ENCODE measurements at regions of chr20 and their contacts with region 1.

Region 1: DNA sequence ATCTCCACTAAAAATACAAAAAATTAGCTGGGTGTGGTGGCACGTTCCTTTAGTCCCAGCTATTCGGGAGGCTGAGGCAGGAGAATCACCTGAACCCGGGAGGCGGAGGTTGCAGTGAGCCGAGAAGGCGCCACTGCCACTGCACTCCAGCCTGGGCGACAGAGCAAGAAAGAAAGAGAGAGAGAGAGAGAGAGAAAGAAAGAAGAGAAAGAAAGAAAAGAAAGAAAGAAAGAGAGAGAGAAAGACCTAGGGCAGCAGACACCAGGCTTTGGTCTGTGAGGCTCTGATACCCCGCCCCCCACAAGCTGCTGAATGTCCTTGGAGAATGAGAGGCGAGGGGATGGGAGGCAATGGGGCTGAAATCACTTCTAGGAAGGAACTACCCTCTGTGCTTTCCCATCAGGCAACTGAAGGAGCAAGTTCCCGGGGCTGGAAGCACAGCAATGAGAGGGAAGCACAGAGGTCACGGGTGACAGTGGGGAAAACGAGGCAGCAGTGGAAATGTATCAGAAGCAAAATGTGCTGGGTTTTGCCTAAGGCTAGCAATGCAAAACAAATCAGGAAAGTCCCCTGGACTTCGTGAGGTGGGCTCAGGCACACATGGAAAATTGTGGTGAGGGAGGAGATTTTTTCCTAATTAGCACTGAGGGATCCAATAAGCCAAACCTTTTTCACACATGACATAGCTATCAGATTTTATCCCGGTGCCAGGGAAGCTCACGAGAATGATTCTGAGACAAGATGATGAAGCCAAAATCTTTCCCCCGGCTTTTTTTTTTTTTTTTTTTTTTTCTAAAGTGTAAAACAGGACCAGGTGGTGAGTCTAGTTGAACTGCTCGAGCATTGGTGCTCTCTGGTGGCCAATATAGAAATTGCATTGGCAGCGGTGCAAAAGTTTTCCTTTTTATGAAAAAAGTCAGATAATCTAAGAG is 16.9 kb upstream of the ARFGEF2 start:
- DNase-seq: no peak
- H3K4me3 ChIP-seq: no peak overlapping the region
- H3K27ac ChIP-seq: no peak overlapping the region
- H3K4me1 ChIP-seq: peaks cover 0 to 3% (median 0%) of the 10 kb centered on the region in 4 donors
- H3K27me3 ChIP-seq: no peaks in the 10 kb centered on the region
- CTCF ChIP-seq: peak; percentile 63 to 79 (median 72)
- EP300 ChIP-seq: no peak
- POLR2A ChIP-seq: no peak

Region 2: GRCh38 chr20:48153135-48153922 is 751.3 kb before region 1 on chr20:
- intact Hi-C with region 1: no loop called
- DNase-seq: no peak
- H3K4me3 ChIP-seq: no peak overlapping the region
- H3K27ac ChIP-seq: no peak overlapping the region
- H3K4me1 ChIP-seq: peaks cover 0 to 5% (median 0%) of the 10 kb centered on the region in 4 donors
- H3K27me3 ChIP-seq: no peaks in the 10 kb centered on the region
- CTCF ChIP-seq: no peak
- EP300 ChIP-seq: no peak
- POLR2A ChIP-seq: no peak

Region 3: DNA sequence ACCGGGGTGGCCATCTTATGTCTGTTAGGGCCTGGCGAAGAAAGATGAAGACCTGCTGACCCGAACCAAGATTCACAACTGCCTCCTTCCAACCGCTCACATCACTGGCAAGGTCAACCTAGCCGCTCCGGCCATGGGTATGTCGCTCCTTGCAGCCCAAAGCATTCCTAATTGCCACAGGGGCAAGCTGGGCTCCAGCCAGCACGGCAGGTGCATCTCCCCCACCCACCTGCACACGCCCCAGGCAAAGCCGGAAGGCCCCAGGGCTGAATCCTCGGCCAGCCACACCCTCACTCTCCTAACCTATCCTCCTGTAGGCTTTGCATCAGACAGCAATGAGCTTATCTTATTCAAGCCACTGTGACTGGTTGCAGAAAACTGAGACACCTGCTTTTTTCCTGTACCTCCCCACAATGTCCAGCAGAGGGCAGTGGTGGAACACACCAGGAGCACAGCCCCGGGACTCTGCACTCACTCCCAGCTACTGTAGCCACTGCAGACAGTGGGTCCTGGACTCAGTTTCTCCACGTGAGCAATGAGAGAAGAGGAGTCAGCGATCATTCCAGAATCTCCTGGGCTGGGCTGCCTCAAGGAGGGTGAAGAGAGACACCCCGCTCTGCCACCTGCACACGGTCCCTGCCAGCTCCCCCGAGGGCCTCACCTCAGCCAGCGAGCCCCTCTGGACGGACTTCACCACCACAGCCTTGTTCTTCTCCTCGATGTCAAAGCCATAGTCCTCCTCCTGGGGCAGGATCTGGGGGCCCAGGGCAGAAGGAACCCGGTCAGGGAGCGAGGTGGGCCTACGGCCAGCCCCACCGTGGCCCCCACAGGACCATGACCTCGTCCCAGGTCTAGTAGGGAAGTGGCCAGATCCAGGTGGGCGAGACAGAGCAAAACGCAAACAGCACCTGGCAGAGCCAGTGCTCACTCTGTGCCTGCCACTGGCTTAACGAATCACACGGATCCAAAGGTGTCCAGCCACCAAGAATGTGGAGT is 246.9 kb before region 1 on chr20:
- intact Hi-C with region 1: loop called (anchors 1 kb)
- DNase-seq: peak; percentile 83
- H3K4me3 ChIP-seq: no peak overlapping the region
- H3K27ac ChIP-seq: no peak overlapping the region
- H3K4me1 ChIP-seq: no peaks in the 10 kb centered on the region
- H3K27me3 ChIP-seq: no peaks in the 10 kb centered on the region
- CTCF ChIP-seq: peak; percentile 83 to 94 (median 92)
- EP300 ChIP-seq: no peak
- POLR2A ChIP-seq: no peak

Region 4: GRCh38 chr20:48828022-48828743 is 76.4 kb before region 1 on chr20:
- intact Hi-C with region 1: loop called (anchors 10 kb)
- DNase-seq: peak; percentile 81
- H3K4me3 ChIP-seq: peak overlapping the region; percentile 25 to 61 (median 52)
- H3K27ac ChIP-seq: peak overlapping the region; percentile 58 to 77 (median 70)
- H3K4me1 ChIP-seq: peaks cover 0 to 24% (median 17%) of the 10 kb centered on the region in 4 donors
- H3K27me3 ChIP-seq: peaks cover 0 to 37% (median 21%) of the 10 kb centered on the region in 3 donors
- CTCF ChIP-seq: no peak
- EP300 ChIP-seq: no peak
- POLR2A ChIP-seq: no peak

Region 5: DNA sequence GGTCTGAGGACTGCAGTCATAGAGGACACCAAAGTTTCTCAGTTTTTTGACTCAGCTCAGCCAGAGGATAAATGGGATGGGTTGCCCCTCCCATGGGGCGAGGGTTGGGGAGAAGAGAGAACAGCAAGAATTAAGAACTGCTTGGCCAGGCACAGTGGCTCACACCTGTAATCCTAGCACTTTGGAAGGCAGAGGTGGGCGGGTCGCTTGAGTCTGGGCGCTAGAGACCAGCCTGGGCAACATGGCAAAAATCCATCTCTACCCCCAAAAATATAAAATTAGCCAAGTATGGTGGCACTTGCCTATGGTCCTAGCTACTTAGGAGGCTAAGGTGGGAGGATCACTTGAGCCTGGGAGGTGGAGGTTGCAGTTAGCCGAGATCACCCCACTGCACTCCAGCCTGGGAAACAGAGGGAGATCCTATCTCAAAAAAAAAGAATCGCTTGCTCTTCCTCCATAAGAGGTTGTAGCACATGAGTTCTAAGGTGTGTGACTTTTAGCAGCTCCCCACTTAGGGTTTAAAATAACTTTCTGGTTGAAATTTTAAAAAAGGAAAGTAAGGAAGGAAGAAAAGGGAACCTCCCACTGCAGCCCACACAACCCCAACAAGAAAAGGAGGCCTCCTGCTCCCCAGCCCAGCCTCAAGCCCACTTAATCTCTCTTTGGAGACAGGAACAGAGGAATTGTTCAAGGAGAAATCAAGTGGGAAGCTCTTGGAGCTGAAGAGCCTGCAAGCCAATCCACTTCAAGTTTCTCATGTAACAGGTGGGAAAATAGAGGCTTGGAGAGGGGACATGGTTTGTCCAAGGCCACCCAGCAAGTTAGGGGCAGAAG is 37.9 kb before region 1 on chr20:
- intact Hi-C with region 1: no loop called
- DNase-seq: no peak
- H3K4me3 ChIP-seq: no peak overlapping the region
- H3K27ac ChIP-seq: no peak overlapping the region
- H3K4me1 ChIP-seq: no peaks in the 10 kb centered on the region
- H3K27me3 ChIP-seq: no peaks in the 10 kb centered on the region
- CTCF ChIP-seq: no peak
- EP300 ChIP-seq: no peak
- POLR2A ChIP-seq: no peak

Region 6: DNA sequence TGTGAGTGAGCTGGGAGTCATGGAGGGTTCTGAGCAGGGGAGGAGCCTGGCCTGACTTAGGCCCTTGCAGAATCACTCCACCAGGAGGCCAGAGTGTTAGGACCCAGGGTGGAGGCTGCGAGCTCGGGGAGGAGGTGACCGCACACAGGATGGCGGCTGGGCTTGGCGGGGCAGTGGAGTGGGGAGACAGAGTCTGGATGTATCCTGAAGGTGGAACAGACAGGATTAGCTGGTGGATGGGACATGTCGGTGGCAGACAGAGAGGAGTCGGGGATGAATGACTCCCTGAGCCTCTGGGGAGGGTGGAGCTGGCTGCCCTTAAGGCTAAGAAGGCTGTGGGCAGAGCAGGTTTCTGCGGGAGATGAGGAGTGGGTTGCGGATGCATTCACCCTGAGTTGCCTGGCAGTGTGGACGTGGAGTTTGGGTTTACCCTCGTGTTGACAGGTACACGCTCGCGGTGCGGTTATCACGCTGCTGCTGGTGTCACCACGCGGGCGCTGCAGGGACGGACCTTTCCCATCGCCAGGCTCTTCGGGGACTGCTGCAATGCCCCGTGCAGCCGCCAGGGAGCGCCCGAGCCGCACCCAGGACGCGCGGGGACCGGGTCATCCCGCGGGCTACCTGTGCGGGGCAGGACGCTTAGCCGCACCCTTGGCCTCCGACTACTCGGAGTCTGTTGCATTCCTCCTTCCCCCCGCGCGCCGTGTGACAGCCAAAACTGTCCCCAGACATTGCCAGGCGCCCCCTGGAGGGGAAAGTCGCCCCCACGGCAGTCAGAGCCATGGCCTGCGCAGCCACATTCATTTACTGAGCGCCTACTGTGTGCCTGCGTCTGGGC is 706.3 kb after region 1 on chr20:
- intact Hi-C with region 1: no loop called
- DNase-seq: peak; percentile 87
- H3K4me3 ChIP-seq: peak overlapping the region in 3 of 4 donors; percentile 10 to 17 (median 16)
- H3K27ac ChIP-seq: no peak overlapping the region
- H3K4me1 ChIP-seq: peaks cover 0 to 17% (median 11%) of the 10 kb centered on the region in 4 donors
- H3K27me3 ChIP-seq: peaks cover 0 to 4% (median 0%) of the 10 kb centered on the region in 3 donors
- CTCF ChIP-seq: peak; percentile 98 to 100 (median 100)
- EP300 ChIP-seq: no peak
- POLR2A ChIP-seq: no peak

Measured in sigmoid colon (tissue), 7 donors.